B cell (primary cell): ENCODE measurements at regions of chr19 and their contacts with region 1.

Region 1: DNA sequence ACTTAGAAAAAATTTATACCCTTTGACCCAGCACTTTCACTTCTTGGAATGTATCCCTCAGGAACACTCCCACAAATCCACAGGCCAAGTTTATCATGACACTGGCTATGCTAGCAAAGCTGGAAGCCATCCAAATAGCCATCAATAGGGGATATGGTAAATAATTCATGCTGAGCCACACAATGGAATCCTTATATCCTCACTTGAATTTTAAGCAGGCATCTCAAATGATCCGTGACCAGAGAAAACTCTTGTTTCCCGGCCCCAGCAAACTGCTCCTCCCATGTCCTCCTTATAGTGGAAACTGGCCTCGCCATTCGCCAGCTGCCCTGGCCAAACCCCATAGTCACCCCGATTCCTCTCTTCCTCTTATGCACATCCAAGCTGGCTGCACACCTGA is 37.6 kb downstream of the GRIK5 start:
- DNase-seq: no peak
- ATAC-seq: no peak
- H3K4me3 ChIP-seq: no peak overlapping the region
- H3K4me3 Mint-ChIP-seq: no peak overlapping the region
- H3K27ac ChIP-seq: no peak overlapping the region
- H3K27ac Mint-ChIP-seq: no peak overlapping the region
- H3K4me1 ChIP-seq: peaks cover 0 to 5% of the 10 kb centered on the region in 2 donors
- H3K4me1 Mint-ChIP-seq: peaks cover 6% of the 10 kb centered on the region
- H3K27me3 ChIP-seq: peaks cover 0 to 8% (median 0%) of the 10 kb centered on the region in 4 experiments
- H3K27me3 Mint-ChIP-seq: peaks cover 14% of the 10 kb centered on the region
- CTCF ChIP-seq: no peak

Region 2: GRCh38 chr19:41928221-41928683 is 104.2 kb before region 1 on chr19 and contains the start of gene ERFL:
- CTCF ChIA-PET with region 1: no interaction called
- POLR2A ChIA-PET with region 1: no interaction called
- intact Hi-C with region 1: no loop called
- DNase-seq: peak; percentile 59
- ATAC-seq: peak; percentile 31
- H3K4me3 ChIP-seq: peak within 1 kb of the TSS; percentile 49 to 72 (median 60)
- H3K4me3 Mint-ChIP-seq: no peak within 1 kb of the TSS
- H3K27ac ChIP-seq: peak within 1 kb of the TSS; percentile 18 to 56
- H3K27ac Mint-ChIP-seq: peak within 1 kb of the TSS; percentile 87
- H3K4me1 ChIP-seq: peaks cover 52 to 60% of the 10 kb centered on the region in 2 donors
- H3K4me1 Mint-ChIP-seq: peaks cover 32% of the 10 kb centered on the region
- H3K27me3 ChIP-seq: peaks cover 0 to 36% (median 7%) of the 10 kb centered on the region in 4 experiments
- H3K27me3 Mint-ChIP-seq: peaks cover 7% of the 10 kb centered on the region
- CTCF ChIP-seq: no peak
- total RNA-seq, gene ERFL: 2.3 and 2.4 TPM in 2 replicates

Region 3: DNA sequence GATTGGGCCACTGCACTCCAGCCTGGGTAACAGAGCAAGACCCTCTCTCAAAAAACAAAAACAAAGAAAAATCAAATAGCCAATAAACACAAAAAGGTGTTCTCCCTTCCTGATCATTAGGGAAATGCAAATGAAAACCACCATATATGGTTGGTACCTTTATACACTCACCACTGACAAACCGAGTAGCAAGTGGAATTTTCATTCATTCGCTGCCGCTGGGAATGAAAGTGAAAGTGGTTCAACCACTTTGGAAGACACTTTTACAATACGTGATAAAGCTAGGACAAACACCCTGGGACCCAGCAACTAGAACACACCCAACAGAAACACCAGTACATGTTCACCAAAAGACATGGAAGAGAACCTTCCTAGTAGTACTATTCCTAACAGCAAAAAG is 16.6 kb after region 1 on chr19:
- CTCF ChIA-PET with region 1: interaction called, 11 read pairs
- POLR2A ChIA-PET with region 1: no interaction called
- intact Hi-C with region 1: no loop called
- DNase-seq: no peak
- ATAC-seq: no peak
- H3K4me3 ChIP-seq: no peak overlapping the region
- H3K4me3 Mint-ChIP-seq: peak overlapping the region; percentile 59
- H3K27ac ChIP-seq: no peak overlapping the region
- H3K27ac Mint-ChIP-seq: no peak overlapping the region
- H3K4me1 ChIP-seq: peaks cover 0 to 4% of the 10 kb centered on the region in 2 donors
- H3K4me1 Mint-ChIP-seq: peaks cover 7% of the 10 kb centered on the region
- H3K27me3 ChIP-seq: no peaks in the 10 kb centered on the region
- H3K27me3 Mint-ChIP-seq: no peaks in the 10 kb centered on the region
- CTCF ChIP-seq: no peak

Region 4: GRCh38 chr19:43316592-43317319 is 1284.3 kb after region 1 on chr19:
- CTCF ChIA-PET with region 1: no interaction called
- POLR2A ChIA-PET with region 1: no interaction called
- intact Hi-C with region 1: no loop called
- DNase-seq: no peak
- ATAC-seq: no peak
- H3K4me3 ChIP-seq: no peak overlapping the region
- H3K4me3 Mint-ChIP-seq: no peak overlapping the region
- H3K27ac ChIP-seq: no peak overlapping the region
- H3K27ac Mint-ChIP-seq: no peak overlapping the region
- H3K4me1 ChIP-seq: no peaks in the 10 kb centered on the region
- H3K4me1 Mint-ChIP-seq: no peaks in the 10 kb centered on the region
- H3K27me3 ChIP-seq: no peaks in the 10 kb centered on the region
- H3K27me3 Mint-ChIP-seq: peaks cover 8% of the 10 kb centered on the region
- CTCF ChIP-seq: no peak